ENCODE measurements at regions of chr3 and their contacts with region 1.

Region 1: GRCh38 chr3:48088749-48089466 is 72.7 kb upstream of the MAP4 start:
- DNase-seq: peak; percentile 98 to 99 (median 99)
- ATAC-seq: peak; percentile 97
- H3K4me3 ChIP-seq: peak overlapping the region; percentile 75
- H3K27ac ChIP-seq: peak overlapping the region; percentile 99
- H3K4me1 ChIP-seq: no peaks in the 10 kb centered on the region
- H3K27me3 ChIP-seq: no peaks in the 10 kb centered on the region

Region 2: DNA sequence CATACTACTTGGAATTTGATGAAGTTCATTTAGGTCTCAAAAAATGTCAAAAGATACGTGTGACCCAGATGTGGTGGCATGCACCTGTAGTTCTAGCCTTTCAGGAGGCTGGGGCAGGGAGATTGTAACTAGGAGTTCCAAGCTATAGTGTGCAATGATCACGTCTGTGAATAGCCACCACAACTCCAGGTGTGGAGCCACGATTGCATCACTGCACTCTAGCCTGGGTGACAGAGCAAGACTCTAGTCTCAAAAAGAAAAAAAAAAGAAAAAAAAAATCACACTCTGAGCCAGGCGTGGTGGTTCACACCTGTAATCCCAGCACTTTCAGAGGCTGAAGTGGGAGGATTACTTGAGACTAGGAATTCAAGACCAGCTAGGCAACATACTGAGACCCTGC is 86.9 kb before region 1 on chr3:
- intact Hi-C with region 1: no loop called
- DNase-seq: no peak
- ATAC-seq: no peak
- H3K4me3 ChIP-seq: no peak overlapping the region
- H3K27ac ChIP-seq: no peak overlapping the region
- H3K4me1 ChIP-seq: peaks cover 4% of the 10 kb centered on the region
- H3K27me3 ChIP-seq: no peaks in the 10 kb centered on the region

Region 3: DNA sequence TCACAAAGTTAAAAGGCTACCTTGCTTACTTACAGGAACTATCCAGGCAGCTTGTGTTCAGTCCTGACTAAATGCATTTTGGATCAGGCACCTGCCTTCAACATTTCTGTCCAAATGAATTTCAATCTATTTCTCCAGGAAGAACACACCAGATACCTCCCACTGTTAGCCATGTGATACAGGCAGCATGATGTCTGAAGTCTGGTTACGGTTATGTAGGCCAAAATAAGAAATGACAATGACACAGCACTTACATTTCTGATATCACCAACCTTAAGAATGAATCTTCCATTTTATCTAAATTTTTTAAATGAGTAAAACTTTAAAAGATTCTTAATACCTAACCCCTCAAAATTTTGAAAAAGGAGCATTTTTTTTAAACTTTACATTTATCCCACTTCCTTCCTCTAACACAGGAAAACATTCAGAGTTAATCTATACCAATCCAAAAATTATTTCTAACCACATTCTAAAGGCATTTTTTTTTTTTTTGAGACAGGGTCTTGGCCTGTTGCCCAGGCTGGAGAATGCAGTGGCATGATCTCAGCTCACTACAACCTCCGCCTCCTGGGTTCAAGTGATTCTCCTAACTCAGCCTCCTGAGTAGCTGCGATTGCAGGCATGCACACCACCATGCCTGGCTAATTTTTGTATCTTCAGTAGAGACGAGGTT is 72.5 kb before region 1 on chr3 and contains the start of gene MAP4:
- intact Hi-C with region 1: loop called in 1 of 4 experiments (anchors 5 kb)
- DNase-seq: peak in 1 of 3 donors; percentile 44
- ATAC-seq: no peak
- H3K4me3 ChIP-seq: peak within 1 kb of the TSS; percentile 20
- H3K27ac ChIP-seq: peak within 1 kb of the TSS; percentile 66
- H3K4me1 ChIP-seq: peaks cover 11% of the 10 kb centered on the region
- H3K27me3 ChIP-seq: no peaks in the 10 kb centered on the region
- total RNA-seq, gene MAP4: 443 to 557 (median 472) TPM

Region 4: DNA sequence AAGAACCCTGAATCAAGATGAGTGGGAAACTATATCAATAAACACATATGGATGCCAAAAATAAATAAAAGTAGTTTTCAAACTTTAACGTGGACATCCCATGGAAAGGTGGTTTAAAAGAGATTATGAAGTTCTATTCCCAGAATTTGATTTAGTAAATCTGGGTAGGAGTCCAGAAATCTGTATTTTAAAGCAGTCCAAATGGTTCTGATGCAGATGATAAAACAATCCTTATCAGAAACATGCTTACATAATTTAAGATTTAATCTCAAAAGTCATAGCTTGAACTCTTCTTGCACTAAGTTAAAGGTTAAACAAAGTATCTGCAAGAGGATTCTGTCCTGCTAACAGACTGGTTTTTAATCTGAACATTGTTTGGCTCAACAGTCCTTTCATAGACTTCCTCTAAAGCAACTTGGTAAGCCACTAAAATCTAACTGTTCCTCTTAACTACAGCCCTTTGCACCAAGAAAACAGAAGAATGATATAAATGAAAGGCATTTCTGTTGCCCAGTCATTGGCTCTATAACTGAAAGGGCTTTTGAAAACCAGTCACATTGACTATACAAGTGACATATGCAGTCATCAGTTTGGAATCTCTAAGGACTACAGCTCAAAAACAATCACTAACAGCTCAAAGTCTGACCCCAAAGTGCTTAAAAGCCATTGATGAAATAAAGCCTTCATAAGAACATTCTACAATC is 49.3 kb before region 1 on chr3:
- intact Hi-C with region 1: no loop called
- DNase-seq: no peak
- ATAC-seq: peak; percentile 29 to 48
- H3K4me3 ChIP-seq: no peak overlapping the region
- H3K27ac ChIP-seq: peak overlapping the region; percentile 65
- H3K4me1 ChIP-seq: peaks cover 14% of the 10 kb centered on the region
- H3K27me3 ChIP-seq: no peaks in the 10 kb centered on the region

Region 5: DNA sequence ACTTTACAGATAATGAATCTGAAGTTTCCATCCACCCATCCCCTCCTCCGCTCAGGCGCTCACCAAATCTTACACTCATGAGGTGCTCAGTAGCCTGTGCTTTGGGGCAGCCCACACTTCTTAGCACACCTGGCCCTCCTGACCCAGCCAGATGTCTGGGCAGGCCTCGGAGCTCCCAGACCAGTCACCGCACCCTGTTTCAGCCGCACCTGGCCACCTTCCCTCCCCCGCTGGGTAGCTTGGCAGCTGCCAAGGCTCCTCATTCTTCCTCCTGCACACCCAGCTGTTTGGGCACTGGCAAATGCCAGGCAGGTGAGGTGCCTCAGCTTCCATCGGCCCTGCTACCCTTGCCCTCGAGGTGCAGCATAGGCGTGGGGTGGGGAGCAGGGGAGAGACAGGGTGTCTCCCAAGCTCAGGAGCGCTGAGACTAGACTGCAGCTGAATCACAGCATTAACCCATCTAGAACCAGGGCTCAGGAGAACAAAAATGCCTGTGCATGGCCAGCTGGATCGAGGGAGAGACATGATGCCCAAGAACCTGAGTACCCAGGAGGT is 53.5 kb after region 1 on chr3:
- intact Hi-C with region 1: loop called in 1 of 4 experiments (anchors 10 kb)
- DNase-seq: no peak
- ATAC-seq: no peak
- H3K4me3 ChIP-seq: no peak overlapping the region
- H3K27ac ChIP-seq: no peak overlapping the region
- H3K4me1 ChIP-seq: no peaks in the 10 kb centered on the region
- H3K27me3 ChIP-seq: no peaks in the 10 kb centered on the region

Region 6: DNA sequence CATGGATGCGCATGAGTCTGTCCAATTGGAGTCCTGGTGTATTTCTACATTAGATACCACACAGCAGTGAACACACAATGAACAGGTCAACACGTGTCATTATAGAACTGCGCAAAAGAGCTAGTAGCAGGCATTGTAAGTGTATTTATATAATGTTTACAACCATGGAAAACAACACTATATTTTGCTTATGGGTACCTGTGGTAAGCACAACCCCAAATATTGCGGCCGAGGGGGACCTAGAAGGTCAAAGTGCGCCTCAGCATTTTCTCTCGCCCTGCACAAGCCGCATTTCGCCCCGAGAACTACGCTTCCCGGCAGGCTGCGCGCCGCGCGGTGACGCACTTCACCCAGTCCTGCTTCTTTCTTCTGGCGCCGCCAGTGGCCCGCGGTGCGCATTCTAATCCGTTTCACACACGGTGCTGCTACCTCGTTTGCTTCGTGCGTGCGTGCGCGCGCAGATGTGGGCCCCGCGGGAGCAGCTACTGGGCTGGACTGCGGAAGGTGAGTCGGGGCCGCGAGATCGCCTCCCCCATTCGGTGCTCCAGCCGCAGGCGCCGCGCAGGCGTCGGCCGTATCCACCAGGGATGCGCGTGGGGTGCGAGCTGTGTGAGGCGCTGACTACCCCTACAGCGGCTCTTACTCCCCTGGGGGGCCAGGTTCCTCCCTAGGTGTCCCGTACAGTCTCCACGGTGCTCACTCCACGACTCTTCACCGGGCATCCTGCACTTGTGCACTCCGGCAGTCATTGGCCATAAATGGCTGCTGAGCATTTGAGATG is 152.0 kb after region 1 on chr3 and contains the start of gene ZNF589:
- intact Hi-C with region 1: no loop called
- DNase-seq: peak; percentile 93 to 97 (median 94)
- ATAC-seq: peak; percentile 96
- H3K4me3 ChIP-seq: peak within 1 kb of the TSS; percentile 56
- H3K27ac ChIP-seq: peak within 1 kb of the TSS; percentile 89
- H3K4me1 ChIP-seq: peaks cover 5% of the 10 kb centered on the region
- H3K27me3 ChIP-seq: no peaks in the 10 kb centered on the region
- total RNA-seq, gene ZNF589: 11.4 to 18.5 (median 15.0) TPM